PC-3 (cell line): ENCODE measurements at regions of chr5 and their contacts with region 1.

Region 1: GRCh38 chr5:94375801-94376200 is 242.6 kb downstream of the KIAA0825 start:
- DNase-seq: peak; percentile 40
- ATAC-seq: peak; percentile 46
- H3K4me3 ChIP-seq: no peak overlapping the region
- H3K27ac ChIP-seq: no peak overlapping the region
- H3K4me1 ChIP-seq: no peaks in the 10 kb centered on the region; the same call in 1 of the 2 replicates
- H3K27me3 ChIP-seq: no peaks in the 10 kb centered on the region
- CTCF ChIP-seq: no peak

Region 2: GRCh38 chr5:94812232-94812631 is 436.4 kb after region 1 on chr5:
- CTCF ChIA-PET with region 1: interaction called, 14 read pairs
- POLR2A ChIA-PET with region 1: no interaction called
- intact Hi-C with region 1: no loop called
- DNase-seq: no peak
- ATAC-seq: no peak
- H3K4me3 ChIP-seq: no peak overlapping the region
- H3K27ac ChIP-seq: no peak overlapping the region
- H3K4me1 ChIP-seq: no peaks in the 10 kb centered on the region
- H3K27me3 ChIP-seq: no peaks in the 10 kb centered on the region
- CTCF ChIP-seq: peak; percentile 30